MCF 10A (cell line): ENCODE measurements at regions of chr3 and their contacts with region 1.

Region 1: DNA sequence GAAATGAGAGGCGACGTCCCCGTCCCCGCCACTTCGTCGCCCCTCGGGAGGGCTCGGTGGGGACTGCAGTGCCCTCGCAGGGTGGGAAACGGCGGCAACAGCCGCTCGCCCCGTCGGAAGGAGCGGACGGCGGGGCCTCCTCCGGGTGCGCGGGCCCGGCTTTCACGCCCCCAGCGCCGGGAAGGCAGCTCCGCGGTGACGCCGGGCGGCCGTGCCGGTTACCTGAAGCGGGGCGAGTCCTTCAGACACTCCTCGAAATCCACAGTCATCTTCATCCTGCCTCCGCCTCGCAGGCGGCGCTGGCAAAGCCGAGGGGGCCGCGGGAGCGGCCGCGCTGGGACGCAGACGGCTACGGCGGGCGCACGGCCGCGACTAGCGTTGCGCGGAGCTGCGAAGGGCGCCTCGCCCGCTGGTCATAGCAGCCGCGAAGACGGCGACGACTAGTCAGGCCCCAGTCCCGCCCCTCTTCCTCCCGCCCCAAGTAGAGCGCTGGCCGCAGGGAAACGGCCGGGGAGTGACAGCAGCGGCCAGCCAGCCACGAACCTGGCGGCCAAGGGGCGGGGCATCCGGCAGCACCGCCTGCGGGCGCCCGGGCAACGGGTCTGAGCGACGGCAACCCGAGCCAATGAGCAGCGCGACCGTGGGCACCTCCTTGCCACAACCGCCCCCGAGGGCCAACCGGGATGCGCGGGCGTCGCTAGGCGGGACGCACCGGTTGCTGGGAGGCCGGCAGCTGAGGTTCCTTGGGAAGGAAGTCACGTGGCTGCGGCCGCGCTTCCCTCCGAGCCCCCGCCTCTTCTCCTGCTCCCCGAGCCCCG is at the start of gene ACAP2:
- DNase-seq: peak; percentile 99
- H3K4me3 Mint-ChIP-seq: peak within 1 kb of the TSS; percentile 96
- H3K27ac Mint-ChIP-seq: peak within 1 kb of the TSS; percentile 94
- H3K4me1 Mint-ChIP-seq: peaks cover 19% of the 10 kb centered on the region
- H3K27me3 Mint-ChIP-seq: no peaks in the 10 kb centered on the region
- CTCF ChIP-seq: no peak
- total RNA-seq, gene ACAP2: 53.2 and 64.3 TPM in 2 replicates

Region 2: GRCh38 chr3:195106418-195106906 is 336.3 kb before region 1 on chr3:
- CTCF ChIA-PET with region 1: no interaction called
- POLR2A ChIA-PET with region 1: no interaction called
- intact Hi-C with region 1: no loop called
- DNase-seq: peak; percentile 34
- H3K4me3 Mint-ChIP-seq: peak overlapping the region; percentile 61
- H3K27ac Mint-ChIP-seq: no peak overlapping the region
- H3K4me1 Mint-ChIP-seq: peaks cover 15% of the 10 kb centered on the region
- H3K27me3 Mint-ChIP-seq: no peaks in the 10 kb centered on the region
- CTCF ChIP-seq: peak; percentile 93

Region 3: GRCh38 chr3:195271116-195271858 is 171.5 kb before region 1 on chr3 and contains the start of gene XXYLT1:
- CTCF ChIA-PET with region 1: interaction called, 12 read pairs
- POLR2A ChIA-PET with region 1: interaction called, 54 read pairs
- intact Hi-C with region 1: loop called (anchors 1 kb)
- DNase-seq: peak; percentile 85
- H3K4me3 Mint-ChIP-seq: peak within 1 kb of the TSS; percentile 81
- H3K27ac Mint-ChIP-seq: peak within 1 kb of the TSS; percentile 69
- H3K4me1 Mint-ChIP-seq: peaks cover 27% of the 10 kb centered on the region
- H3K27me3 Mint-ChIP-seq: no peaks in the 10 kb centered on the region
- CTCF ChIP-seq: peak; percentile 90
- total RNA-seq, gene XXYLT1: 10.0 and 10.9 TPM in 2 replicates

Region 4: GRCh38 chr3:195352895-195353488 is 89.8 kb before region 1 on chr3:
- CTCF ChIA-PET with region 1: no interaction called
- POLR2A ChIA-PET with region 1: interaction called, 5 read pairs
- intact Hi-C with region 1: loop called (anchors 5 kb)
- DNase-seq: peak; percentile 74
- H3K4me3 Mint-ChIP-seq: no peak overlapping the region
- H3K27ac Mint-ChIP-seq: peak overlapping the region; percentile 82
- H3K4me1 Mint-ChIP-seq: peaks cover 6% of the 10 kb centered on the region
- H3K27me3 Mint-ChIP-seq: no peaks in the 10 kb centered on the region
- CTCF ChIP-seq: no peak

Region 5: DNA sequence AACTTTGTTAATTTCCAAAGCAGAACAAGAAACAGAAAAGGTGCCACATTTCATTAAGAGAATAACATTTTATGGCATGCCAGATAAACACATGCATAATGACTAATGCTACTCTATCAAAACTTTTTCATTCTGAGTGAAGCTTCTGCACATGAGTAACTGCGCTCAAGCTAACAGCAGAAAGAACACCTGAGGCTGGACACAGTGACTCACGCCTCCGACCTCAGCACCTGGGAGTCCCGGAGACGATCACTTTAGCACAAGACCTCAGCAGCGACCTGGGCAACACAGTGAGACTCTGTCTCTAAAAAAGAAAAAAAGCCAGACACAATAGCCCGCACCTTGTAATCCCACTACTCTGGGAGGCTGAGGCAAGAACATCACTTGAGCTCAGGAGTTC is 70.6 kb before region 1 on chr3:
- CTCF ChIA-PET with region 1: interaction called, 4 read pairs
- POLR2A ChIA-PET with region 1: interaction called, 10 read pairs
- intact Hi-C with region 1: loop called (anchors 5 kb)
- DNase-seq: peak; percentile 73
- H3K4me3 Mint-ChIP-seq: no peak overlapping the region
- H3K27ac Mint-ChIP-seq: no peak overlapping the region
- H3K4me1 Mint-ChIP-seq: peaks cover 9% of the 10 kb centered on the region
- H3K27me3 Mint-ChIP-seq: no peaks in the 10 kb centered on the region
- CTCF ChIP-seq: no peak

Region 6: GRCh38 chr3:195522254-195523023 is 79.7 kb after region 1 on chr3:
- CTCF ChIA-PET with region 1: interaction called, 4 read pairs
- POLR2A ChIA-PET with region 1: interaction called, 4 read pairs
- intact Hi-C with region 1: loop called (anchors 1 kb)
- DNase-seq: peak; percentile 59
- H3K4me3 Mint-ChIP-seq: no peak overlapping the region
- H3K27ac Mint-ChIP-seq: no peak overlapping the region
- H3K4me1 Mint-ChIP-seq: no peaks in the 10 kb centered on the region
- H3K27me3 Mint-ChIP-seq: no peaks in the 10 kb centered on the region
- CTCF ChIP-seq: peak; percentile 53

Region 7: DNA sequence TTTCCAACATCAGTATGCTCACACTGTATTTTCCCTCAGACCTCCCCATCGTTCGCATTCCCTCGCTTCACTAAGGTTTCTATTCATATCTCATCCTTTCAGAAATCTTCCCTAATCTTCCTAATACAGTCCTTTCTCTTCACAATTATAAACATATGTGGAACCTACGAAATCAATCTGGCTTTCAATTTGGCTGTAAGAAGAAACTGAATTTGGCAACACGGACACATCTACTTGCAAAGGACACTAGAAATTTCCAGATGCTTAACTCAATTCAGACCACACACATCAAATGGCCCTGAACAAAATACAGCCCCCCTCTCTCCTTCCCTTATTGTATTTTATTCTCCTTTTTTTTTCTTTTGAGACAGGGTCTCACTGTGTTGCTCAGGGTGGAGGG is 934.5 kb after region 1 on chr3:
- CTCF ChIA-PET with region 1: no interaction called
- POLR2A ChIA-PET with region 1: no interaction called
- intact Hi-C with region 1: no loop called
- DNase-seq: no peak
- H3K4me3 Mint-ChIP-seq: no peak overlapping the region
- H3K27ac Mint-ChIP-seq: no peak overlapping the region
- H3K4me1 Mint-ChIP-seq: no peaks in the 10 kb centered on the region
- H3K27me3 Mint-ChIP-seq: no peaks in the 10 kb centered on the region
- CTCF ChIP-seq: no peak